Activated CD4-positive, alpha-beta T cell treated with anti-CD3 and anti-CD28 coated beads, Interleukin-2, amount 10 ng/mL, durations not matched to agents 24 days and 14 days (primary cell): ENCODE measurements at regions of chr1 and their contacts with region 1.

Region 1: GRCh38 chr1:67332653-67333529 is 25.2 kb downstream of the IL12RB2 start:
- DNase-seq: peak; percentile 86
- H3K4me3 Mint-ChIP-seq: peak overlapping the region; percentile 74
- H3K27ac Mint-ChIP-seq: peak overlapping the region; percentile 85
- H3K4me1 Mint-ChIP-seq: peaks cover 73% of the 10 kb centered on the region
- H3K27me3 Mint-ChIP-seq: no peaks in the 10 kb centered on the region

Region 2: GRCh38 chr1:66981679-66982078 is 351.2 kb before region 1 on chr1:
- intact Hi-C with region 1: no loop called
- DNase-seq: peak; percentile 88
- H3K4me3 Mint-ChIP-seq: peak overlapping the region; percentile 79
- H3K27ac Mint-ChIP-seq: peak overlapping the region; percentile 35
- H3K4me1 Mint-ChIP-seq: peaks cover 27% of the 10 kb centered on the region
- H3K27me3 Mint-ChIP-seq: no peaks in the 10 kb centered on the region

Region 3: DNA sequence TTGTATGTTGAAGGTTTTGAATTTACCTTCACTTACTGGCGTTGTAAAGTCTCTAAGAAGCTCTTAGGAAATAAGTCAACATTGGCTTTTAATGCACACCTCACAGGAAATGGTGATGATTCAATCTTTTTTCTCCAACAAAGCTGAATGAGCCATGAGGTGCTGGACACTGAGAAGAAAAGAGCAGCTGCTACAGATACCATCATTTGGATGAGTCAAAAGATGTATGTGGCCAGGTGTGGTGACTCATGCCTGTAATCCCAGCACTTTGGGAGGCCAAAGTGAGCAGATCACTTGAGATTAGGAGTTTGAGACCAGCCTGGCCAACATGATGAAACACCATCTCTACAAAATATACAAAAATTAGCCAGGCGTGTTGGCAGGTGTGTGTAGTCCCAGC is 169.9 kb before region 1 on chr1:
- intact Hi-C with region 1: loop called (anchors 1 kb)
- DNase-seq: peak; percentile 83
- H3K4me3 Mint-ChIP-seq: peak overlapping the region; percentile 39
- H3K27ac Mint-ChIP-seq: peak overlapping the region; percentile 89
- H3K4me1 Mint-ChIP-seq: peaks cover 39% of the 10 kb centered on the region
- H3K27me3 Mint-ChIP-seq: no peaks in the 10 kb centered on the region

Region 4: DNA sequence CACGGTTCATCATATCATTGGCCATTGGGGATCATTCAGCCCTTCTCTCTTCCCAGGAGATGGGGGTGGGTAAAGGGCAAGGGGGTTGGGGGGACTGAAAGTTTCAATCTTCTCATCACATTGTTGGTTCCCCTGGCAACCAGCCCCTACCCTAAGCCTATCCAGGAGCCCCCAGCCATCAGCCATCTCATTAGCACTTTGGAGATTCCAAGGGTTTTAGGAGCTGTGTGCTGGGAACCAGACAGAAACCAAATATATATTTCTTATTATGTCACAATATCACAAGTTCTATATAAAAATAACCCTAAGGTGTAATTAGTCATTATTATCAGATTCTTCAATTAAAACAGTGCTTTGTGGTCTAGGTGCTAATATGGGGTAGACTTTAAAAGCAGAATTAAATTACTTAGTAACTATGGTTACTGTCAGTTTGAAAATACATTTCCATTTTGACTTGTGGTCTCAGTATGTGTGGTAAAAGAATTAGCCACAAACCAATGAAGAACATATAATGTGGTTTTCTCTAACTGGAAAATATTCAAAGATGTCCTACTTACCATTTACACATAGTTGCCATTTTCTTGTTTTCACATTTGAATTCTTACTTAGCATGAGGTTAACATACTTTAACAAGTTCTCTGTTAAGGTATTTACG is 138.6 kb before region 1 on chr1:
- intact Hi-C with region 1: loop called (anchors 2 kb)
- DNase-seq: peak; percentile 66
- H3K4me3 Mint-ChIP-seq: no peak overlapping the region
- H3K27ac Mint-ChIP-seq: peak overlapping the region; percentile 86
- H3K4me1 Mint-ChIP-seq: peaks cover 8% of the 10 kb centered on the region
- H3K27me3 Mint-ChIP-seq: no peaks in the 10 kb centered on the region

Region 5: GRCh38 chr1:67230539-67230938 is 102.4 kb before region 1 on chr1:
- intact Hi-C with region 1: loop called (anchors 2 kb)
- DNase-seq: no peak
- H3K4me3 Mint-ChIP-seq: no peak overlapping the region
- H3K27ac Mint-ChIP-seq: no peak overlapping the region
- H3K4me1 Mint-ChIP-seq: peaks cover 9% of the 10 kb centered on the region
- H3K27me3 Mint-ChIP-seq: no peaks in the 10 kb centered on the region

Region 6: DNA sequence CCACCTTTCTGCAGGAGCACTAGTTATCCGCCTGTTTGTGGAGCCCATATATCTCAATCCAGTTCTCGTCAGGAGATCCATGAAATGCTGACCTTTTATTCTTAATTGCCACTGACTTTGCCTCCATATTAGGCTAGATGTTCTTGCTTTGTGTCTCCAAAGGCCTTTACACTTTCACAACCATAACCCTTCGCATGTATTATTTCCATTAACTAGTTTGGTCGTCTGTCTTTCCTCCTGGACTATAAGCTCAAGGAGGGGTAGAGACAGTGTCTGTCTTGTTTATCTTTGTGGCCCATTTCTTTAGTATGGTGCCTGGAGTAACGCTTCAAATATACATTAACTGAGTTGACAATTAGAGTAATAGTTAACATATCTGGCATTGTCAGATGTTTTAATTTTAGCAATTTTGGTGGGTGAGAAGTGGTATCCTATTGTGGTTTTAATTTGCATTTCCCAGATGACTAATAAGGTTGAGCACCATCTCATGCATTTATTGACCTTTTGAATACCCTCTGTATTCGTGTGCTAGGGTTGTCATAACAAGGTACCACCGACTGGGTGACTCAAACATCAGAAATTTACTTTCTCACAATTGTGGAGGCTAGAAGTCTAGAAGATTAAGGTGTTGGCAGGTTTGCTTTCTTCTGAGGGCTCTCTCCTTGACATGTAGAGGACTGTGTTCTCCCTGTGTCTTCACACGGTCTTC is 47.0 kb before region 1 on chr1:
- intact Hi-C with region 1: loop called (anchors 1 kb)
- DNase-seq: no peak
- H3K4me3 Mint-ChIP-seq: peak overlapping the region; percentile 4
- H3K27ac Mint-ChIP-seq: peak overlapping the region; percentile 80
- H3K4me1 Mint-ChIP-seq: peaks cover 33% of the 10 kb centered on the region
- H3K27me3 Mint-ChIP-seq: no peaks in the 10 kb centered on the region

Region 7: DNA sequence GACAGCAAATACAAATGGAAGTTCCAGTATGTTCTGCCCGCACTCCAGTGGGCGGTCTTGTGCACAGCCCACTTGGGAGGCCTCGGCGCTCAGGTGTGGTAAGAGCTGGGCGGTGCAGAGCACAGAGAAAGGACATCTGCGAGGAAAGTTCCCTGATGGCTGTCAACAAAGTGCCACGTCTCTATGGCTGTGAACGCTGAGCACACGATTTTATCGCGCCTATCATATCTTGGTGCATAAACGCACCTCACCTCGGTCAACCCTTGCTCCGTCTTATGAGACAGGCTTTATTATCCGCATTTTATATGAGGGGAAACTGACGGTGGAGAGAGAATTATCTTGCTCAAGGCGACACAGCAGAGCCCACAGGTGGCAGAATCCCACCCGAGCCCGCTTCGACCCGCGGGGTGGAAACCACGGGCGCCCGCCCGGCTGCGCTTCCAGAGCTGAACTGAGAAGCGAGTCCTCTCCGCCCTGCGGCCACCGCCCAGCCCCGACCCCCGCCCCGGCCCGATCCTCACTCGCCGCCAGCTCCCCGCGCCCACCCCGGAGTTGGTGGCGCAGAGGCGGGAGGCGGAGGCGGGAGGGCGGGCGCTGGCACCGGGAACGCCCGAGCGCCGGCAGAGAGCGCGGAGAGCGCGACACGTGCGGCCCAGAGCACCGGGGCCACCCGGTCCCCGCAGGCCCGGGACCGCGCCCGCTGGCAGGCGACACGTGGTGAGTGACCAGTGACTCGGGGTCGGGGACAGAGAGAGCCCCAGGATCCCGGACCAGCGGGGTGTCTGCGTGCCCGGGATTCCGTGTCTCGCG is 25.4 kb before region 1 on chr1 and contains the start of gene IL12RB2:
- intact Hi-C with region 1: loop called (anchors 1 kb)
- DNase-seq: peak; percentile 93
- H3K4me3 Mint-ChIP-seq: peak within 1 kb of the TSS; percentile 97
- H3K27ac Mint-ChIP-seq: peak within 1 kb of the TSS; percentile 100
- H3K4me1 Mint-ChIP-seq: peaks cover 64% of the 10 kb centered on the region
- H3K27me3 Mint-ChIP-seq: no peaks in the 10 kb centered on the region
- total RNA-seq, gene IL12RB2: 138 and 146 TPM in 2 replicates

Region 8: DNA sequence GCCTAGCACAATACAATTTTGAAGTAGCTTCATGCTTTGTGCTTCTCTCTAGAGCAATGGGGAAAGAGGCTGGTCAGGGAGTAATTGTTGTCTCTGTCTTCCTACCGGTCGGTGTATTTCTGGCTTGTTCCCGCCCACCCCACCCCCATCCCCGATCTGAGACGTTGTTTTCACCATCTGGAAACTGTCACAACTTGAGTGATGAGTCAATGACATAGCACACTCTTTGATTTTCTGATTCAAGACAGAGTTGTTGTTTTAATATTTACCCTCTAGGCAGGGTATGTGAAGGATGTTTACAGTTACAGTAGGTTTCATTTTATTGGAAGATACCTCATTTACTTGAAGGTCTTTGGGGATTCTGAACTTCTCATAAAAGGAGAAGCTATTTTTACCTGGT is 18.2 kb before region 1 on chr1:
- intact Hi-C with region 1: loop called (anchors 1 kb)
- DNase-seq: peak; percentile 80
- H3K4me3 Mint-ChIP-seq: peak overlapping the region; percentile 50
- H3K27ac Mint-ChIP-seq: peak overlapping the region; percentile 89
- H3K4me1 Mint-ChIP-seq: peaks cover 53% of the 10 kb centered on the region
- H3K27me3 Mint-ChIP-seq: no peaks in the 10 kb centered on the region